ENCODE measurements at regions of chr12 and their contacts with region 1.

Region 1: DNA sequence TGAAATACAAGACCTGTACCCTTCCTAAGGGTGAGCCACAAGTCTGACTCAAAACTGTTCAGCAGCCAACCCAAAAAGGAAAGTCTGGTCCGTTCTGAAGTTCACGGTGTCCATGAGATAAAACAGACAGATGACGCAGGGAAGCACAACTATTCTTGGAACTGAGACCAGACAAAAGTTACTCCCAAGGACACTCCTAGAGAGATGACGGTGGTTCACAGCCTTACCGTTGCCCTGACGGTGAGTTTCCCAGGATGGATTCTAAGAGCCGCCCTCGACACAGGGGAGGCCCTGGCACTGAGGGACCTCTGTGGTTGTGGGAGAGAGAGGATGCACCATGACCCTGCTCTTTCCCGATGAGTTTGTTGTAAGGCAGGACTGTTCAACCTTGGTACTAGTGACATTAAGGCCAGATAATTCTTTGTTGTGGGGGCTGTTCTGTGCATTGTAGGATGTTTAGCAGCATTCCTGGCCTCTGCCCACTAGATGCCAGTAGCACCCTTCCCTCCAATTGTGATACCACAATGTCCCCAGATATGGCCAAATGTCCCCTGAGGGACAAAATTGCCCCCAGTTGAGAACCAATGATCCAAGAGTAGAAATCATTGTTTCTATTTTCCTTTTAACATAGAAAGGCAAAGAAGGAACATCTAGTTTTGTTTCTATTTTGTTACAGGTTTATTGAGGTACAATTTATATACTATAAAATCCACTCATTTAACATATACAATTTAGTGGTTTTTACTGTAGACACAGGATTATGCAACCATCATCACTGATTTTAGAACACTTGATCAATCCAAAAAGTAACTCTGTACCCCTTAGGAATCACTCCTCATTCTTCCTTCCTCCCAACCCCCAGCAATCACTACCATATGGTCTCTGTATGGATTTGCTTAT is 23.0 kb downstream of the OR10P1 start:
- DNase-seq: no peak
- CTCF ChIP-seq: peak; percentile 54

Region 2: GRCh38 chr12:55619354-55620138 is 40.2 kb before region 1 on chr12:
- CTCF ChIA-PET with region 1: interaction called, 11 read pairs
- POLR2A ChIA-PET with region 1: no interaction called
- DNase-seq: peak; percentile 70
- CTCF ChIP-seq: peak; percentile 74

Region 3: DNA sequence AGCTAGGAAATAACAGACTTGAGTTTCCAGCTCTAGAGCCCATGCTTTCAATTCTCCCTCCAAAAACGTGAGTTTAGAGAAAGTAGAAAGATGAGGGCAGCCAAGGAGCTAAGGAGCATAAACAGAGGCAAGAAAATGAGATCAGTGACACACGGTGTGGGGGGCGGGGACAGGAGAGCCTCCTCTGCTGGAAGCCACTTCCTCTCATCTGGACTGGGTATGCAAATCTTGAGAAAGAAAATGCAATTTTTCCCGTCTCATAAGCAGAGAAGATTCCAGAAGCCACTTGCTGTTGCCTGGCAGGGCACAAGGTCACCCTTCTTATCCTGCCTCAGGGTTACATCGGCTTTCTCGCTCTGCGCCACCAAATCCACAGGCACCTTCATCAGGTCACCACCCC is 17.1 kb before region 1 on chr12:
- CTCF ChIA-PET with region 1: interaction called, 99 read pairs
- POLR2A ChIA-PET with region 1: no interaction called
- DNase-seq: no peak
- CTCF ChIP-seq: no peak

Region 4: DNA sequence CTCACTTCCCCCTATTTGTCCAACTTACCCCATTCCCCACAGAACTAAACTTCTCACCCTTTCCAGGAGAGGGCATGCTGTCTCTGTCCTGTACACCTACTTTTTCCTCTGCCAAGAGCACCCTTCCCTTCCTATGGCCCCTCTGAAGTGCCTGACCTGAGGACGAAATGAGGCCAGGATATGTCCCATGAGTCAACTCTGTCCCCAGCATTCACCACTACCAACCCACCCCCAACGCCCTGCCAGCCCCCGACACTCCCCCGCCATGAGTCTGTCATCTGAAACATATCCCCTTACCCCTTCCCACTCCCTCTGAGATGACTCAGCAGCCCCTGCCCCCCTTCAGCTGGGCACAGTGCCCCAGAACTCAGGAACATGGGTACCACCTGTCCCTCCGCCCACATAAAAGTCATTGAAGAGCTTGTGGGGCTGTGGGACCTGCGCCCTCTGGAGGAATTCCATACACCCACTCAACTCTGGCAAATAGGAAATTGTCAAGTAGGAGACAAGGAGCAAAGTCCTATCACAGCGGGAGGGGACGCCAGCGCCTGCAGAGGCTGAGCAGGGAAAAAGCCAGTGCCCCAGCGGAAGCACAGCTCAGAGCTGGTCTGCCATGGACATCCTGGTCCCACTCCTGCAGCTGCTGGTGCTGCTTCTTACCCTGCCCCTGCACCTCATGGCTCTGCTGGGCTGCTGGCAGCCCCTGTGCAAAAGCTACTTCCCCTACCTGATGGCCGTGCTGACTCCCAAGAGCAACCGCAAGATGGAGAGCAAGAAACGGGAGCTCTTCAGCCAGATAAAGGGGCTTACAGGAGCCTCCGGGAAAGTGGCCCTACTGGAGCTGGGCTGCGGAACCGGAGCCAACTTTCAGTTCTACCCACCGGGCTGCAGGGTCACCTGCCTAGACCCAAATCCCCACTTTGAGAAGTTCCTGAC is 21.7 kb after region 1 on chr12:
- CTCF ChIA-PET with region 1: interaction called, 25 read pairs
- POLR2A ChIA-PET with region 1: no interaction called
- DNase-seq: no peak
- CTCF ChIP-seq: peak; percentile 14

Region 5: DNA sequence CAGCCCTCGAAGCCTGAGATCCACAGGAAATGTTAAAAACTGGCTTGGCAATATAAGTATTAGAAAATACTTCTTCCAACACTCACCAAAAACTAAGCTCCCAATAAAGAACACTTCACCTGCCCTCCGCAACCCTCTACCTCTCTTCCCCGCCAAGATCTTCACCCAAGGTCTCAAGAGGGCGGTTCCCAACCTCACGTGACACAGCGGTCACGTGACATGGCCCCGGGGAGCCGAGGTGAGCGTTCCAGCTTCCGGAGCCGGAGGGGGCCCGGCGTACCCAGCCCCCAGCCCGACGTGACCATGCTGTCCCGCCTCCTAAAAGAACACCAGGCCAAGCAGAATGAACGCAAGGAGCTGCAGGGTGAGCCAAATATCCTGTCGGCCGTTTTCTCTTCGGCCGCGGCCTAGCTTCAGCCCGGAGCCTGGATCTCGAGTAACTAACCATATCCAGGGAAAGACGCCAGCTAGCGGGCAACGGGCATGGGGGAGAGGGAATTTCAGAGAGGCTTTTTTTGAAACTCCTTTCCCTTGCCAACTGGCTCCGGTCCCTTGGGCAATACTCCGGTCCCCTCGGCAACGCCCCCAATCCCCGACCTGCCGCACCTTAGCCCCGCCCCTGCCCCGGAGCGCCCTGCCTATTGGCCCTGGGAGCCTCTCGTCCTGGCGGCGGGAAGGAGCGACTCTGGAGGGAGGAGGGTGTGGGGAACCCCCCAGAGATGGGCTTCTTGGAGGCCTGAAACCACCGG is 56.3 kb after region 1 on chr12 and contains the start of gene BLOC1S1:
- CTCF ChIA-PET with region 1: interaction called, 15 read pairs
- POLR2A ChIA-PET with region 1: no interaction called
- DNase-seq: peak; percentile 95
- CTCF ChIP-seq: no peak

Region 6: GRCh38 chr12:55789171-55789570 is 129.4 kb after region 1 on chr12:
- CTCF ChIA-PET with region 1: no interaction called
- POLR2A ChIA-PET with region 1: no interaction called
- DNase-seq: no peak
- CTCF ChIP-seq: no peak

Region 7: GRCh38 chr12:56117778-56118687 is 458.3 kb after region 1 on chr12 and contains the start of gene ZC3H10:
- CTCF ChIA-PET with region 1: no interaction called
- POLR2A ChIA-PET with region 1: no interaction called
- DNase-seq: peak; percentile 93
- CTCF ChIP-seq: peak; percentile 62